ENCODE measurements at regions of chr1 and their contacts with region 1.

Region 1: DNA sequence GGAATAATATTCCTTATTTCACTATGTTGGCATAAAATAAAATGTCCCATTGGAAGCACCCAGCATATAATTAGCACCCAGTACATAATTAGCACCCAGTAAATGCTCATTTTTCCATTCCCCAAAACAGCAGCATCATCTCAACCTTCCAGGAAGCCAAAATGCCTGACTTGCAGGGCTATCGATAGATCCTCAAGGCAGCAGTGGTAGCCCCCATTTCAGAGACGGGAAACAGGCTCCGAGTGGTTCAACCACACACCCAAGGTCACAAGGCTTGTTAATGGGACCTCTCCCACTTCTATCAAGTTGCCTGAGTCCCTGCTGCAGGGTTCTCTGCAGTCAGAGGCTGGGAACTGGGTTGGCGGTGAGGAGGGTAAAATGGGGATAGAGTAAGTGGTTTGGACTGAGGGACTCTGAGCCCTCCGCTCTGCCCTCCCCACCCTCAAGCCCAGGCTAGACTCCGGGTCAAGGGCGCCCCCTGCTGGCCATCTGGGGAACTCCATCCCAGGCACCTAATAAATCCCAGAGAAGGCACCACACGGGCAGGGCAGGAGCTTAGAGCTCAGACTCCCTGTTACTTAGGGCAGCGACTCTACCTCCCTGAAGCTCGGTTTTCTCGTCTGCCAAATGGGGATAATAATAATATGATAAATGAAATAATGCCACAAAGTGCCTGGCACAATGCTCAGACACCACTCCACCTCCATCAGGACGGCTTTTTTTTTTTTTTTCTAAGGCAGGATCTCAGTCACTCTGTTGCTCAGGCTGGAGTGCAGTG is 21.9 kb upstream of the LAPTM5 start:
- DNase-seq: peak; percentile 82 to 93 (median 91)
- H3K4me3 ChIP-seq: peak overlapping the region; percentile 33
- H3K4me3 Mint-ChIP-seq: peak overlapping the region in 5 of 7 donors; percentile 19 to 49 (median 23)
- H3K27ac ChIP-seq: peak overlapping the region; percentile 78
- H3K27ac Mint-ChIP-seq: peak overlapping the region in 7 of 8 donors; percentile 3 to 81 (median 36)
- H3K4me1 ChIP-seq: peaks cover 19% of the 10 kb centered on the region
- H3K4me1 Mint-ChIP-seq: peaks cover 15 to 29% (median 18%) of the 10 kb centered on the region in 3 donors
- H3K27me3 ChIP-seq: no peaks in the 10 kb centered on the region
- H3K27me3 Mint-ChIP-seq: no peaks in the 10 kb centered on the region

Region 2: GRCh38 chr1:30700528-30701257 is 78.8 kb before region 1 on chr1:
- CTCF ChIA-PET with region 1: no interaction called
- POLR2A ChIA-PET with region 1: no interaction called
- DNase-seq: no peak
- H3K4me3 ChIP-seq: no peak overlapping the region
- H3K4me3 Mint-ChIP-seq: no peak overlapping the region
- H3K27ac ChIP-seq: no peak overlapping the region
- H3K27ac Mint-ChIP-seq: no peak overlapping the region
- H3K4me1 ChIP-seq: no peaks in the 10 kb centered on the region
- H3K4me1 Mint-ChIP-seq: no peaks in the 10 kb centered on the region
- H3K27me3 ChIP-seq: no peaks in the 10 kb centered on the region
- H3K27me3 Mint-ChIP-seq: peaks cover 2 to 5% of the 10 kb centered on the region in 2 donors

Region 3: GRCh38 chr1:30748699-30749401 is 30.6 kb before region 1 on chr1:
- CTCF ChIA-PET with region 1: interaction called, 47 read pairs
- POLR2A ChIA-PET with region 1: interaction called, 4 read pairs
- DNase-seq: no peak
- H3K4me3 ChIP-seq: peak overlapping the region; percentile 53
- H3K4me3 Mint-ChIP-seq: peak overlapping the region; percentile 80 to 100 (median 85)
- H3K27ac ChIP-seq: peak overlapping the region; percentile 53
- H3K27ac Mint-ChIP-seq: peak overlapping the region; percentile 92 to 100 (median 100)
- H3K4me1 ChIP-seq: peaks cover 98% of the 10 kb centered on the region
- H3K4me1 Mint-ChIP-seq: peaks cover 97 to 100% (median 100%) of the 10 kb centered on the region in 3 donors
- H3K27me3 ChIP-seq: no peaks in the 10 kb centered on the region
- H3K27me3 Mint-ChIP-seq: peaks cover 0 to 12% of the 10 kb centered on the region in 2 donors

Region 4: DNA sequence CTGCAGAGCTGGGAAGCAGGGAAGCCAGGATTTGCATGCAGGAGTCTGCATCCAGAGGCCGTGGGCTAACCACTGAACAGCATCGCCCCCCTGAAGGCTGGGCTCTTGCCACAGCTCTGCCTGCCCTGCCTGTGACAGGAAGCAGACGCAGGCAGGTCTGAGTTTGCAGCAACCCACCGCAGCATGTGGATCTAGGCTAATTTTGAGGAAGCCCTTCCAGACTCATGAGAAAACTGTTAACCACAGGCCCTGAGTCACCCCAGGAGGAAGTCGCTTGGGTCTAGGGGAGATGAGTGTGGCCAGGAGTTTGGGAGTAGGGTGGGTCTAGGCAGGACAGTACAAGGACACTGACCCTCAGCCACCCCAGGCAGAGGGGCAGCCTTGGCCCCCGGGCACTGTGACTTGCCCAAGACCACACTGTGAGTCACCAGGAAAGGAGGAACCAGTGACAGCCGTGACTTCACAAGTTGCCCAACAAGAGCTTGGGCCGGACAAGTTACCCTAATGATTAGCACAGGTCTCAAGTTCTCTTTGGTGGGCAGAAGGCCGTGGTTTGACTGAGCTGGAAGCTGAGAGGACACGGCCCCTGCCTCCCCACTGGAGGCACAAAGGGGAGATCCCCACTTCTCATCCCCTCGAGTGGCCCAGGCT is 22.8 kb before region 1 on chr1:
- CTCF ChIA-PET with region 1: interaction called, 20 read pairs
- POLR2A ChIA-PET with region 1: no interaction called
- DNase-seq: peak; percentile 70 to 90 (median 78)
- H3K4me3 ChIP-seq: peak overlapping the region; percentile 74
- H3K4me3 Mint-ChIP-seq: peak overlapping the region; percentile 96 to 100 (median 99)
- H3K27ac ChIP-seq: peak overlapping the region; percentile 96
- H3K27ac Mint-ChIP-seq: peak overlapping the region; percentile 98 to 100 (median 100)
- H3K4me1 ChIP-seq: peaks cover 75% of the 10 kb centered on the region
- H3K4me1 Mint-ChIP-seq: peaks cover 85 to 90% (median 86%) of the 10 kb centered on the region in 3 donors
- H3K27me3 ChIP-seq: no peaks in the 10 kb centered on the region
- H3K27me3 Mint-ChIP-seq: peaks cover 0 to 2% of the 10 kb centered on the region in 2 donors

Region 5: DNA sequence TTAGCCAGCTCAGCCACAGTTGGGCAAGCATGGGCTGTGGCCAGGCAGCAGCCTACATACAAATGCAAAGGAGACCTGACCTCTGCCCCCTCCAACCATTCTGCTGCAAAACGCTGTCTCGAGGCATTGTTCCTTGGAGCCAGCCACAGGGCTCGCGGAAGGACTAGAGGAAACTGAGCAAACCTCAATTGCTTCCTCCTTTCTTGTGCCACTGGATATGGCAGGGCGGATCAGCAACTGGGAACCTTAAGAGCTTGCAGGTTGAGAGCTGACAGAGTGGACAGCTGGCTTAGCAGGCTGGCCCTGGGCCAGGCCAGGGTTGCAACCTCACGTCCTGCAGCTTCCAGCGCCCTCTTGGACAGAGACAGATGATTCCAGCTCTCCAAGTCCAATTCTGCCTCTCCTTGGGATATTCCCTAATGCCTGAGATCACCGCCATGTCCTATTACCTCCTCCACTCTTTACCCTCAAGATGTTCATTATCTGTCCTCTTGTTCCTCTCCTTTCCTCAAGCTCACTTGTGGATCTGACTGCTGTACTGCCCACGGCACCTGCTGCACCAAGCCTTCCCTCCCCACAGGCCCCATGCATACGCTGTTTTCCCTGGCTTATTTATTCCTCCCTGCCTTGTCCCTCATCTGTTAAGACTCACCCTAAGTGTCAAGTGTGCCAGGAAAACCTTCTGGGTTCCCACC is 61.6 kb after region 1 on chr1:
- CTCF ChIA-PET with region 1: no interaction called
- POLR2A ChIA-PET with region 1: no interaction called
- DNase-seq: no peak
- H3K4me3 ChIP-seq: no peak overlapping the region
- H3K4me3 Mint-ChIP-seq: no peak overlapping the region
- H3K27ac ChIP-seq: no peak overlapping the region
- H3K27ac Mint-ChIP-seq: no peak overlapping the region
- H3K4me1 ChIP-seq: no peaks in the 10 kb centered on the region
- H3K4me1 Mint-ChIP-seq: peaks cover 0 to 9% (median 4%) of the 10 kb centered on the region in 3 donors
- H3K27me3 ChIP-seq: peaks cover 21% of the 10 kb centered on the region
- H3K27me3 Mint-ChIP-seq: peaks cover 29 to 68% of the 10 kb centered on the region in 2 donors